Activated CD8-positive, alpha-beta T cell treated with anti-CD3 and anti-CD28 coated beads, Interleukin-2, amount 10 ng/mL, durations not matched to agents 7 days and 5 days (primary cell): ENCODE measurements at regions of chr6 and their contacts with region 1.

Region 1: DNA sequence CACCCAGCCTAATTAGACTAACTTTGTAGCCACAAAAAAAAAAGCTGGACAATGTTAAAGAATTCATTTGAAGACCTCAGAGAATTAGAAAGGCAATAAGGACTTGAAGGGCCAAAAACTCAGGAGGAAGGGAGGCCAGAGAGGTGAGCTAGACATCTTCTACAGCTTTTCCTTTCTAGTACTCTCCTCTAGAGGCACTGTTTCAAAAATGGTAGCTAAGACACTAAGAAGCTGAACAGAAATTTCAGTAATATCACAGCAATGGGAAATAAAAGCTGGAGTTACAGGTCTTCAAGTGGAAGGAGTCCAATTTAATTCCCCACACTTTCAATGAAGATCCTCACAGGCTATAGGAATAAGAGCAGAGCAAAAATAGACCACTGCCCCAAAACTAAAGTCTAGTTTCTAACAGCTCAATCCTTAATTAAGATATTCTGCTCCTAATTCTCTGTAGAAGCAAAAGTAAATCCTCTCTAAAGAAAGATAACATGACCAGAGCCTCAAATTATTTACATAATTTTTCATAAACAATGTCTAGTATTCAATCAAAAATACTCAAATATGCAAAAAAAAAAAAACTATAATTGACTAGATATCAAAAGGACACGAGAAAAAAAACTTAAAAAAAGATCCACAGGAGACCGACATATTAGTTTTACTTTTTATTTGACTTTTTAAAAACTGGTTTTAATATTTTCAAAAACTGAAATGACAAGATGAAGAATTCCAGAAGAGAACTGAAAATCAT is 63.7 kb downstream of the RNGTT start:
- DNase-seq: no peak
- ATAC-seq: no peak
- H3K4me3 Mint-ChIP-seq: no peak overlapping the region
- H3K27ac Mint-ChIP-seq: no peak overlapping the region
- H3K4me1 Mint-ChIP-seq: no peaks in the 10 kb centered on the region
- H3K27me3 Mint-ChIP-seq: no peaks in the 10 kb centered on the region

Region 2: DNA sequence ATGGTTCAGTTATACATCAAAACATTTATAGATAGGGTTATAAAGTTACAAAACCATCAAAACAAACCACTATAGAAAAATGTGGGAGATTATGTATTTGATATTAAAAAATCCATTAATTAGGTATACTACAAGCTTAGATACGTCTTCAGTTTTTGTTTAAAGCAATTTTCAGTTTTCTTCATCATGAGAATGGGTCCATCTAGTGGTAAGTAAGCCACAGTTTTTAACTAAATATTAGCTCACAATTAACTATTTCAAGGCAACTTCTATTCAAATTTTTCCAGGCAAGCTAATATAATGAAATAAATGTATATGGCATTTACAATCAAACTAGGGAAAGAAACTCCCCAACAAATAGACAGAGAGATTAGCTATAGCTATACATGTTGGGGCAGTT is 19.3 kb after region 1 on chr6:
- CTCF ChIA-PET with region 1: interaction called, 19 read pairs
- POLR2A ChIA-PET with region 1: no interaction called
- DNase-seq: no peak
- ATAC-seq: no peak
- H3K4me3 Mint-ChIP-seq: no peak overlapping the region
- H3K27ac Mint-ChIP-seq: no peak overlapping the region
- H3K4me1 Mint-ChIP-seq: peaks cover 22% of the 10 kb centered on the region
- H3K27me3 Mint-ChIP-seq: no peaks in the 10 kb centered on the region